ENCODE measurements at regions of chr17 and their contacts with region 1.

Region 1: DNA sequence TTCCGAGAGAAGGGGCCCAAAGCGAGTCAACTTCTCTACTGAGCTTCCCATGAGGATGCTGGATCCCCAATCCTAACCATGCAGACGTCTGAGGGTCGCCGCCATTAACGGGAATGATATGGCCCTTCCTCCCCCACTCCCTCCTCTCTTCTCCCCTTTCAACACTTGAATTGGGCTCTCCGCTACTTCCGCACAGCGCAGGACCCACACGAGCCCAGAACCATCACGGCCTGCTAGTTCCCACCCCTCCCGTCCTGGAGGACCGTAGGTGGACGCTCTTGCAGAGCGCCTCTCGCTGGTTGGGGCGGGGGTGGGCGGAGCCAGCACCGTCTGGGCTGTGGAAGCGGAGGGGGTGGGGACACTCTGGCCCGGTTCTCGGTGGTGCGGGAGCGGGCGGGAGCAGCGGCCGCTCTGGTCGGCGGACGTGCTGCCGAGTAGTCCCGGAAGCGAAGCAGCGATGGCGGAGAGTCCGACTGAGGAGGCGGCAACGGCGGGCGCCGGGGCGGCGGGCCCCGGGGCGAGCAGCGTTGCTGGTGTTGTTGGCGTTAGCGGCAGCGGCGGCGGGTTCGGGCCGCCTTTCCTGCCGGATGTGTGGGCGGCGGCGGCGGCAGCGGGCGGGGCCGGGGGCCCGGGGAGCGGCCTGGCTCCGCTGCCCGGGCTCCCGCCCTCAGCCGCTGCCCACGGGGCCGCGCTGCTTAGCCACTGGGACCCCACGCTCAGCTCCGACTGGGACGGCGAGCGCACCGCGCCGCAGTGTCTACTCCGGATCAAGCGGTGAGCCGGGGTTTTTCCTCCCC is at the start of gene UBE2Z:
- DNase-seq: peak; percentile 93
- ATAC-seq: peak; percentile 90
- H3K4me3 Mint-ChIP-seq: peak within 1 kb of the TSS; percentile 100
- H3K27ac Mint-ChIP-seq: peak within 1 kb of the TSS; percentile 99
- H3K4me1 Mint-ChIP-seq: peaks cover 31% of the 10 kb centered on the region
- H3K27me3 Mint-ChIP-seq: no peaks in the 10 kb centered on the region
- CTCF ChIP-seq: no peak
- total RNA-seq, gene UBE2Z: 65.1 to 69.7 TPM (median 68.4 TPM) in 3 replicates

Region 2: GRCh38 chr17:48892940-48893645 is 15.2 kb before region 1 on chr17:
- CTCF ChIA-PET with region 1: interaction called, 9 read pairs
- POLR2A ChIA-PET with region 1: interaction called, 23 read pairs
- DNase-seq: no peak
- ATAC-seq: no peak
- H3K4me3 Mint-ChIP-seq: peak overlapping the region; percentile 96
- H3K27ac Mint-ChIP-seq: peak overlapping the region; percentile 98
- H3K4me1 Mint-ChIP-seq: peaks cover 11% of the 10 kb centered on the region
- H3K27me3 Mint-ChIP-seq: no peaks in the 10 kb centered on the region
- CTCF ChIP-seq: no peak

Region 3: DNA sequence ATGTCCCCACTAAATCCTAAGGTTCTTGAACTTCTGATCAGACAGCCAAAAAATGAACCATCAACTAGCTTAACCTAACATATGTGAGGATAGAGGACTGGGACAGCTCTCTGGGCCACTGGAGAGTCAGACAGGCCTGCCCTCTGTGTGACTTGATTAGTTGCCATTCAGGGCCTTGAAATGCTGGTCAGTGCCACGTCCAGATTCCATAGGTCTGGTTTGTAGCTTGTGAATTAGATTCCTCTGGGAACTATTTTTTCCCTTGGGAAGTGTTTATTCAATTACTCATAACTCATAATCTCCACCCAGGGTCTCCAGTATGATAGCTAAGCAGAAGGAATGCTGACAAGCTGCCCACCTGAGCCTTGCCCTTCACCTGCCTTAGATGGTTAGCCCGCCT is 137.1 kb after region 1 on chr17:
- CTCF ChIA-PET with region 1: no interaction called
- POLR2A ChIA-PET with region 1: no interaction called
- DNase-seq: no peak
- ATAC-seq: no peak
- H3K4me3 Mint-ChIP-seq: no peak overlapping the region
- H3K27ac Mint-ChIP-seq: no peak overlapping the region
- H3K4me1 Mint-ChIP-seq: no peaks in the 10 kb centered on the region
- H3K27me3 Mint-ChIP-seq: no peaks in the 10 kb centered on the region
- CTCF ChIP-seq: no peak

Measured in WTC11 (cell line).